ENCODE measurements at regions of chr17 and their contacts with region 1.

Region 1: GRCh38 chr17:59829217-59830006 is 63.3 kb downstream of the TUBD1 start:
- DNase-seq: peak; percentile 57
- H3K4me3 Mint-ChIP-seq: peak overlapping the region; percentile 85
- H3K27ac Mint-ChIP-seq: peak overlapping the region; percentile 99
- H3K4me1 Mint-ChIP-seq: peaks cover 64% of the 10 kb centered on the region
- H3K27me3 Mint-ChIP-seq: no peaks in the 10 kb centered on the region

Region 2: DNA sequence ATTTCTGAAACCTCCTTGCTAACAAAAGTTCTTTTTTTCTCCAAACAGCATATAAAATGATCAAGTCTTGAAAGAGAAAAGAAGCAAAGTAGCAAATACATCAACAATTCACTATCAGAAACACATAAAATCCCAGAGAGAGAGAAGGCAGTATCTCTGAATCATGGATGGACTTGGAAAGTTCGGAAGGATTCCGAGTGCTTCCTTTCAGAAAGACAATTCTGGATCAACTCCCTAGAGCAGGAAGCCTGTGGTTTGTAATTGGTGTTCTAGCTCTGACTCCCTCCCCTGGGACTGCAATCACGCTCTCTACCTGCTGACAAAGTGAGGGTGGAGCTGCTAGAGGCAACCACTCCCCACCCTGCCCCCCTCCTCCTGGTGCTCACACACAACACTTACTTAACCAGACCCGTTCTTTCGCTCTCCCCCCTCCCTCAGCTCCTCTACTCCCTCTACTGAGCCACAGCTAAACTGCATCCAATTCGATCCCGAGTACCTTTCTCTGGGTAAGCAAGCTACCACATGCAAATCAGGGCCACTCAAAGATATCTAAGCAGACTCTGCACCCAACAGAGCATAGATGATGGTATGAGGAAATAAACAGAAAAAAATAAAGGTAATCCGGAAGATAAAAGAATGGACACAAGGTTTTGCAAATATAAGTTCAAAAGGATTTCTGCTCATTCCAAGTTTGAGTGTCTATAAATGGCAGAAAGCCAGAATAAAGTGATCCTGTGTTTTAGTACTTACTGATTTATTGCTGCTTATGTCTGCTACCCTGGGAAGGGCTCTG is 1411.9 kb before region 1 on chr17 and contains the start of gene RNF43:
- intact Hi-C with region 1: loop called (anchors 10 kb)
- DNase-seq: peak; percentile 87
- H3K4me3 Mint-ChIP-seq: peak within 1 kb of the TSS; percentile 84
- H3K27ac Mint-ChIP-seq: peak within 1 kb of the TSS; percentile 79
- H3K4me1 Mint-ChIP-seq: peaks cover 46% of the 10 kb centered on the region
- H3K27me3 Mint-ChIP-seq: no peaks in the 10 kb centered on the region
- total RNA-seq, gene RNF43: 20.5 and 23.9 TPM in 2 replicates

Region 3: GRCh38 chr17:59707114-59707970 is 122.1 kb before region 1 on chr17 and contains the starts of genes PTRH2 and VMP1:
- intact Hi-C with region 1: loop called (anchors 1 kb)
- DNase-seq: peak; percentile 93
- H3K4me3 Mint-ChIP-seq: peak within 1 kb of the TSS; percentile 95
- H3K27ac Mint-ChIP-seq: peak within 1 kb of the TSS; percentile 85
- H3K4me1 Mint-ChIP-seq: peaks cover 43% of the 10 kb centered on the region
- H3K27me3 Mint-ChIP-seq: no peaks in the 10 kb centered on the region
- total RNA-seq, gene PTRH2: 48.3 and 50.3 TPM in 2 replicates
- total RNA-seq, gene VMP1: 479 and 499 TPM in 2 replicates

Region 4: DNA sequence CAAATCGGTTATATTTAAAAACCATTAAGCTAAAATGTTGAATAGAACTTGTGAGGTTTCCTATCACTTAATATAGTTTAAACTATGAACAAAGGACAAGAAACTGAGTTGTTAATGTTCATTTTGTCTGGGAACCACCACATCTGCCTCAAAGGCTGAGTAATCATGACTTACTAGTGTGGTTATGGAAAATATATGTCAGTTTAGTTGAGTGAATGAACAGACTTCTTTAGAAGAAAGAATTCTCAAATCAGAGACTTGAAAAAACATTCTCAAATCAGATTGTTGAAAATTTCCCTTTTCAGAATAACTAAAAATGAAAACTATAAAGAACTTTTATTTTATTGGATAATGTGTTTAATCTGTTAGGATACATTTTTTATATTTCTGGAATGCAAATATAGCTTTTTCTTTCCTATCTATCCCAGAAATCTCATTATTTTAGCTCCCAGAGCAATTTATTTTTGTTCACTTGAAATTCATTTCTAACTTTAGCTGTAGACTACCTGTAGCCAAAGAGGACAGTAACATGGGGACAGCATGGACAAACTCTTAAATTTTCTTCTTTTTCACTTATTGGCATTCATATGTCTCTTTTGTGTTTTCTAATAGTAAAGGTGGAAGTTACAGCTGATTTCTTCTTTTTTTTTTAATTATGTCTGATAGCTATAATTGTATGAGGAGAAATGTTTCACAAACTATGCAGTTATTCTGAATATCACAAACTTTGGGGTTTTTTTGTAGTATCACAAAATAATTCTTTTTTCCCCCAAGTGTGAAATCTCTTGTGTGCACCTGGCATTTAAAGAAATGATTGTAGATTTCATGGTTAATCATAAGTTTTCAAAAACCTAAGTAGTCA is 66.7 kb before region 1 on chr17:
- intact Hi-C with region 1: loop called (anchors 1 kb)
- DNase-seq: no peak
- H3K4me3 Mint-ChIP-seq: peak overlapping the region; percentile 59
- H3K27ac Mint-ChIP-seq: peak overlapping the region; percentile 95
- H3K4me1 Mint-ChIP-seq: peaks cover 47% of the 10 kb centered on the region
- H3K27me3 Mint-ChIP-seq: no peaks in the 10 kb centered on the region

Region 5: GRCh38 chr17:59846394-59847165 is 17.2 kb after region 1 on chr17:
- intact Hi-C with region 1: loop called (anchors 2 kb)
- DNase-seq: no peak
- H3K4me3 Mint-ChIP-seq: peak overlapping the region; percentile 35
- H3K27ac Mint-ChIP-seq: peak overlapping the region; percentile 69
- H3K4me1 Mint-ChIP-seq: peaks cover 48% of the 10 kb centered on the region
- H3K27me3 Mint-ChIP-seq: no peaks in the 10 kb centered on the region